Ascending aorta (tissue), 2 donors: ENCODE measurements at regions of chr7 and their contacts with region 1.

Region 1: DNA sequence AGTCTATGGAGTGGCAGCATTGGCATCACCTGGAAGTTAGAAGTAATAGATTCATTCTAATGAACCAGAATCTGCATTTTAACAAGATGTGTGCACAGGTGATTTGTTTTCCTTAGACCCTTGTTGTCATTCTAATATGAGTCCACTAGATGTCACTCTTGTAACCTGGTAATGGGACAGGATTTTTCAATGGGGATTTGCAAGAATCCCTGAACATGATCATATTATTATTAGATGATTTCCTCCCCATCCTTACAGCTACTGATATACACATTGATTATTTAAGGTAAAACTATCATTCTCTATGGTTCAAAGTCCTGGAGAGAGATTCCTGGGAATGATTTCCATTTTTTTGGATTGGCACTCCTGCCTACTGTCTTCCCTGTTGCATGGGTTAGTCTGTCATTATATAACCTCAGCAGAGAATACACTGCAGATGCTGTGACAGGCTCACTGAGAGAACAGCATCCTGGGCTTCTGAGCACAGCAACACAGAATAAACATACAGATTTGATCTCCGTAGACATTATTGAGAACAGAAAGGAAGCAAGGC is 194.9 kb downstream of the SUGCT start:
- DNase-seq: no peak
- H3K4me3 ChIP-seq: no peak overlapping the region
- H3K27ac ChIP-seq: peak overlapping the region; percentile 2 to 43
- H3K4me1 ChIP-seq: peaks cover 0 to 5% of the 10 kb centered on the region in 2 donors
- H3K27me3 ChIP-seq: no peaks in the 10 kb centered on the region
- CTCF ChIP-seq: peak; percentile 69 to 83 (median 71)

Region 2: GRCh38 chr7:40604601-40605438 is 275.1 kb after region 1 on chr7:
- intact Hi-C with region 1: loop called (anchors 2 kb)
- DNase-seq: peak in 1 of 2 donors; percentile 74
- H3K4me3 ChIP-seq: peak overlapping the region; percentile 3 to 5
- H3K27ac ChIP-seq: no peak overlapping the region
- H3K4me1 ChIP-seq: peaks cover 0 to 8% of the 10 kb centered on the region in 2 donors
- H3K27me3 ChIP-seq: no peaks in the 10 kb centered on the region
- CTCF ChIP-seq: peak; percentile 54 to 72 (median 61)

Region 3: GRCh38 chr7:40833888-40834234 is 504.2 kb after region 1 on chr7:
- intact Hi-C with region 1: no loop called
- DNase-seq: no peak
- H3K4me3 ChIP-seq: no peak overlapping the region
- H3K27ac ChIP-seq: no peak overlapping the region
- H3K4me1 ChIP-seq: peaks cover 0 to 8% of the 10 kb centered on the region in 2 donors
- H3K27me3 ChIP-seq: no peaks in the 10 kb centered on the region
- CTCF ChIP-seq: no peak